Ovary (tissue), 10 donors: ENCODE measurements at regions of chr9 and their contacts with region 1.

Region 1: GRCh38 chr9:16871356-16872151 is 1.1 kb upstream of the BNC2 start:
- DNase-seq: peak; percentile 55 to 78 (median 69)
- H3K4me3 ChIP-seq: peak overlapping the region; percentile 88
- H3K27ac ChIP-seq: peak overlapping the region; percentile 93
- H3K4me1 ChIP-seq: peaks cover 1% of the 10 kb centered on the region
- H3K27me3 ChIP-seq: no peaks in the 10 kb centered on the region
- CTCF ChIP-seq: no peak
- EP300 ChIP-seq: no peak
- POLR2A ChIP-seq: no peak

Region 2: DNA sequence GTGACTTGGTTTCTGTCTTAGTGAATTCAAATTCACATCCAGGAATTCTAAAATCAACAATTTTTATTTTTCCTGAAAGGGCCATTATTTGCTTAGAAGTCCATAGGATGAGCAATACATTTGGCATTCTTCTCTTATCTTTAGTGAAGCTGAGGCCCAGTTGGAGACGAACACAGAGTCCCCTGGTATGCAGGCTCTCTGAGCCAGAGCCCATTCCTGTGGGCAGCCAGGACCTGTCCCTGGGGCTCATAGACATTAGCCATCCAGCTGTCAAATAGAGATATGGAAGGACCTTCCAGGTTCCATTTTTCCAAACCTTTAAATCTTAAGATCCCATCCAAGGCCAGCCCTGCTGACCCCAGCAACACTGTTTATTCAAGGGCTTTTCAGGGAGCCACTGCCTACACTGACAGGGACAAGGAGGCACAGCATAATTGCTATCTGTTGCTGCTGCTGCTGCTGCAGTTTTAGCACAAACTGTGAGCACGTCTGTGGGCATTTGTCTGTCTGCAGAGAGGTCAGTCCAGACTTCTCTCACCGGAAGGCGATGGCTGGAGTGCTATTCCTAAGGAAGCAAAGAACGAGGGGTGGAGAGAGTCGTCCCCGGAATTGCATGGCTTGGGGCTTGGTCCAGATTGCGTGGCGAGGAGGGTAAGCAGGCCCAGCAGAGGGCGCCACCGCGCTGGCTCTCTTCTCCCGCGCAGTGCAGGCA is 679.7 kb before region 1 on chr9:
- intact Hi-C with region 1: loop called in 3 of 4 experiments (anchors 10 kb)
- DNase-seq: peak; percentile 87 to 95 (median 91)
- H3K4me3 ChIP-seq: no peak overlapping the region
- H3K27ac ChIP-seq: peak overlapping the region in 1 of 2 donors; percentile 43
- H3K4me1 ChIP-seq: peaks cover 11% of the 10 kb centered on the region
- H3K27me3 ChIP-seq: no peaks in the 10 kb centered on the region
- CTCF ChIP-seq: peak; percentile 61 to 83 (median 81)
- EP300 ChIP-seq: no peak
- POLR2A ChIP-seq: no peak

Region 3: GRCh38 chr9:16417161-16417560 is 454.4 kb before region 1 on chr9:
- intact Hi-C with region 1: loop called in 1 of 4 experiments (anchors 5 kb)
- DNase-seq: no peak
- H3K4me3 ChIP-seq: peak overlapping the region; percentile 1
- H3K27ac ChIP-seq: peak overlapping the region in 1 of 2 donors; percentile 65
- H3K4me1 ChIP-seq: peaks cover 21% of the 10 kb centered on the region
- H3K27me3 ChIP-seq: no peaks in the 10 kb centered on the region
- CTCF ChIP-seq: no peak
- EP300 ChIP-seq: no peak
- POLR2A ChIP-seq: no peak

Region 4: GRCh38 chr9:16705121-16705604 is 166.4 kb before region 1 on chr9:
- intact Hi-C with region 1: loop called in 1 of 4 experiments (anchors 10 kb)
- DNase-seq: peak; percentile 76 to 85 (median 79)
- H3K4me3 ChIP-seq: peak overlapping the region; percentile 30
- H3K27ac ChIP-seq: peak overlapping the region in 1 of 2 donors; percentile 81
- H3K4me1 ChIP-seq: peaks cover 9% of the 10 kb centered on the region
- H3K27me3 ChIP-seq: no peaks in the 10 kb centered on the region
- CTCF ChIP-seq: no peak
- EP300 ChIP-seq: peak; percentile 66
- POLR2A ChIP-seq: no peak

Region 5: DNA sequence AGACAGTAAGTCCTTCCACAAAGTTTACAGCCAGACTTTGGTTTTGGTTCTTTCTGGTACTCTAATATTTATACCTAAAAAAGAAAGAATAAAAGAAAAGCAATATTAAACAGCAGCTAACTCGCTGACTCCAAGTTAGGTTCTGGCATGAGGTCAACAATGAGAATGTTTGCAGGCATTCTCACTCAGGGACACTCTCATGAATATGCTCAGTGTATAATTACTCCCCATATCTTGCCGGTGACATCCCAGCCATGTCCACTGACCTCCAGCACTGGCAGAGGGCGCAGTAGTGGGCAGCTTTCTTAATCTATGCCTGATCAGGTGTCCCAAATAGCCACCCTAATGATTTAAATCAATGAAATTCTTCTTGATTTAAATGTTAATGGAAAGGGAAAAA is 152.6 kb before region 1 on chr9:
- intact Hi-C with region 1: no loop called
- DNase-seq: no peak
- H3K4me3 ChIP-seq: no peak overlapping the region
- H3K27ac ChIP-seq: peak overlapping the region; percentile 17 to 94
- H3K4me1 ChIP-seq: peaks cover 10% of the 10 kb centered on the region
- H3K27me3 ChIP-seq: no peaks in the 10 kb centered on the region
- CTCF ChIP-seq: no peak
- EP300 ChIP-seq: no peak
- POLR2A ChIP-seq: no peak